ENCODE measurements at regions of chr1 and their contacts with region 1.

Region 1: DNA sequence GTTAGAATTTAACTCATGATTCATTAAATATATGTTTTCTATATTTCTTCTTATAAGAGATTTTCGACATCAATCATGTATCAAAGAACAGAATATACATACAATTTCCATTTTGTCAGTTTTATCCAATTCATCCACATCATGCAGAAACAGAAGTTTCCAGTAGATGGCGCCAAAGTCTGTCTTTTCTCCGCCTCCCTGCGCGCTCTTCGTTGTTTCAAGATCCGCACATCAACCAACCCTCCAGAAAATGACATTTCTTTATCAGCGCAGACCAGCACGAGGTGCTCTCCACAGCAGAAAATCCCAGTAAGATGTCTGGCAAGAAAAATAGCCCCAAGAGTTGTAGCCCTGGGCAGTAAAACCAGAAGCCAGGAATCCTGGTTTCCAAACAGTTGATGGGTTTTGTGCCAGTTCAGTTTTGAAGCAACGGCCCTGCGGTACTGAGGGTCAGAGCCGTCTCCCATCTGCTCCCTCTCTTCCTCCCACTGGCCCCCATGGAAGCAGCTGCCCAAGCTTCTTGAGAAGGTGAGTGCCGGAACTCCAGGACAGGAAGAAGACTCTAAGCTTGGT is 38.6 kb upstream of the GPR137B start:
- DNase-seq: peak; percentile 74
- ATAC-seq: peak; percentile 56
- H3K4me3 ChIP-seq: no peak overlapping the region
- H3K4me3 Mint-ChIP-seq: no peak overlapping the region
- H3K27ac ChIP-seq: no peak overlapping the region
- H3K27ac Mint-ChIP-seq: no peak overlapping the region
- H3K4me1 ChIP-seq: peaks cover 0 to 3% of the 10 kb centered on the region in 2 donors
- H3K4me1 Mint-ChIP-seq: peaks cover 2% of the 10 kb centered on the region
- H3K27me3 ChIP-seq: peaks cover 0 to 3% (median 0%) of the 10 kb centered on the region in 4 experiments
- H3K27me3 Mint-ChIP-seq: peaks cover 4% of the 10 kb centered on the region
- CTCF ChIP-seq: peak; percentile 94

Region 2: DNA sequence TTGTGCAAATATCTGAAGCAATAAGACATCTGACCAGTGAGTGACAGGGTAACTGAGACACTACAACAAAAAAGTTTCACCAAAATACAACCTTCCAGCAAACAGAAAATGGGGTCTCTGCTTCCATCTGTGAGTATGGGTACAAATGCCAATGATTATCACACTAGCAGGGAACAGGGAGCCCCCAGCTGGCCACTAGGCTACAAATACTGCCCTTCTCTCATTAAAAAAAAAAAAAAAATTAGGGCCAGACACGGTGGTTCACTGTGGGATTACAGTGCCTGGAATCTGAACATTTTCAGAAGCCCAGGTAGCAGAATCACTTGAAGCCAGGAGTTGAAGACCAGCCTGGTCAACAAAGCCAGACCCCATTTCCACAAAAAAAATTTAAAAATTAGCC is 242.0 kb after region 1 on chr1:
- CTCF ChIA-PET with region 1: interaction called, 5 read pairs
- POLR2A ChIA-PET with region 1: no interaction called
- intact Hi-C with region 1: loop called (anchors 5 kb)
- DNase-seq: no peak
- ATAC-seq: no peak
- H3K4me3 ChIP-seq: no peak overlapping the region
- H3K4me3 Mint-ChIP-seq: no peak overlapping the region
- H3K27ac ChIP-seq: no peak overlapping the region
- H3K27ac Mint-ChIP-seq: no peak overlapping the region
- H3K4me1 ChIP-seq: no peaks in the 10 kb centered on the region
- H3K4me1 Mint-ChIP-seq: no peaks in the 10 kb centered on the region
- H3K27me3 ChIP-seq: peaks cover 0 to 7% (median 0%) of the 10 kb centered on the region in 4 experiments
- H3K27me3 Mint-ChIP-seq: peaks cover 14% of the 10 kb centered on the region
- CTCF ChIP-seq: no peak

Region 3: DNA sequence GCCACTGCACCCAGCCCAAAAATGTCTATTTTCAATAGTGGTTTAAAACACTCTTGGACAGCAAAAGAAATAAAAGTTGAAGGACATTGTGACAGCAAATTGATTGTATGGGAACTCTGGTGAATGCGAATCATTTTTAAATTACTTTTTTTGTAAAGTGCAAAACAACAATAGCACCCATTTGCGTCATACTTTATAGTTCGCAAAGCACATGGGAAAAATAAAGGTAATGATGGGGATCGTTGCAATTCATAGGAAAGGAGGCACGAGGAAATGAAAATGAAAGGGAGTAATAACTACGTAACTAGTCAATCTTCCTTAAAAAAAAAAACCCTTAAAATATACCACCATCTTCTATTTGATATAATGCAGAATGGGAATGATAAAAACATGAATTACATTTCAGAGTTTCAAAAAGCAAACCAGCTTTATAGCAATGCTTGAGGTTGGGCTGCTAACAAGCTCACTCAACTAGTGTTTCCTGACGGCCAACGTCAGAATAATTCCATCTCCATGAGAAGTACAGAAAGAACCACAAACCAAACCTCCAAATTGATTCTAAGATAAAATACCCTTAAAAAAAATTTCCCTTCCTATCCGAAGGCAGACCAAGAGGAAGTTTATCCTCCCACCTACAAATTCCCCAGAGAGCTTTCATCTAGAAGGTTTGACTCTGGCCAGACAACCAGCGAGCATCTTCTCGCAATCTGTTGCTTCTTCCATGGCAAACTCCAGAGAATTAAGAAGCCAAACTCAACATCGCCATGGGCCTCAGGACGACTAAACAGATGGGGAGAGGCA is 290.1 kb after region 1 on chr1 and contains the start of gene EDARADD:
- CTCF ChIA-PET with region 1: no interaction called
- POLR2A ChIA-PET with region 1: no interaction called
- intact Hi-C with region 1: no loop called
- DNase-seq: no peak
- ATAC-seq: no peak
- H3K4me3 ChIP-seq: peak within 1 kb of the TSS in 4 of 5 experiments; percentile 22 to 56 (median 48)
- H3K4me3 Mint-ChIP-seq: peak within 1 kb of the TSS; percentile 81
- H3K27ac ChIP-seq: no peak within 1 kb of the TSS
- H3K27ac Mint-ChIP-seq: no peak within 1 kb of the TSS
- H3K4me1 ChIP-seq: peaks cover 22 to 25% of the 10 kb centered on the region in 2 donors
- H3K4me1 Mint-ChIP-seq: peaks cover 23% of the 10 kb centered on the region
- H3K27me3 ChIP-seq: peaks cover 0 to 38% (median 11%) of the 10 kb centered on the region in 4 experiments
- H3K27me3 Mint-ChIP-seq: peaks cover 53% of the 10 kb centered on the region
- CTCF ChIP-seq: no peak
- total RNA-seq, gene EDARADD: not detected in 2 replicates

Region 4: GRCh38 chr1:236489710-236490377 is 386.1 kb after region 1 on chr1:
- CTCF ChIA-PET with region 1: interaction called, 174 read pairs
- POLR2A ChIA-PET with region 1: no interaction called
- intact Hi-C with region 1: loop called (anchors 1 kb)
- DNase-seq: peak; percentile 65
- ATAC-seq: peak; percentile 43
- H3K4me3 ChIP-seq: no peak overlapping the region
- H3K4me3 Mint-ChIP-seq: no peak overlapping the region
- H3K27ac ChIP-seq: no peak overlapping the region
- H3K27ac Mint-ChIP-seq: no peak overlapping the region
- H3K4me1 ChIP-seq: no peaks in the 10 kb centered on the region
- H3K4me1 Mint-ChIP-seq: no peaks in the 10 kb centered on the region
- H3K27me3 ChIP-seq: peaks cover 0 to 10% (median 6%) of the 10 kb centered on the region in 4 experiments
- H3K27me3 Mint-ChIP-seq: peaks cover 36% of the 10 kb centered on the region
- CTCF ChIP-seq: peak; percentile 85

Measured in B cell (primary cell).